A673 (cell line): ENCODE measurements at regions of chr21 and their contacts with region 1.

Region 1: GRCh38 chr21:17679002-17679600 is 66.4 kb upstream of the BTG3 start:
- DNase-seq: peak; percentile 61
- H3K4me3 ChIP-seq: no peak overlapping the region
- H3K27ac ChIP-seq: no peak overlapping the region
- H3K4me1 ChIP-seq: no peaks in the 10 kb centered on the region
- H3K27me3 ChIP-seq: no peaks in the 10 kb centered on the region
- CTCF ChIP-seq: peak; percentile 77

Region 2: GRCh38 chr21:17793246-17794123 is 114.4 kb after region 1 on chr21:
- CTCF ChIA-PET with region 1: no interaction called
- POLR2A ChIA-PET with region 1: no interaction called
- intact Hi-C with region 1: no loop called
- DNase-seq: peak; percentile 2
- H3K4me3 ChIP-seq: no peak overlapping the region
- H3K27ac ChIP-seq: no peak overlapping the region
- H3K4me1 ChIP-seq: peaks cover 11% of the 10 kb centered on the region
- H3K27me3 ChIP-seq: no peaks in the 10 kb centered on the region
- CTCF ChIP-seq: no peak

Region 3: DNA sequence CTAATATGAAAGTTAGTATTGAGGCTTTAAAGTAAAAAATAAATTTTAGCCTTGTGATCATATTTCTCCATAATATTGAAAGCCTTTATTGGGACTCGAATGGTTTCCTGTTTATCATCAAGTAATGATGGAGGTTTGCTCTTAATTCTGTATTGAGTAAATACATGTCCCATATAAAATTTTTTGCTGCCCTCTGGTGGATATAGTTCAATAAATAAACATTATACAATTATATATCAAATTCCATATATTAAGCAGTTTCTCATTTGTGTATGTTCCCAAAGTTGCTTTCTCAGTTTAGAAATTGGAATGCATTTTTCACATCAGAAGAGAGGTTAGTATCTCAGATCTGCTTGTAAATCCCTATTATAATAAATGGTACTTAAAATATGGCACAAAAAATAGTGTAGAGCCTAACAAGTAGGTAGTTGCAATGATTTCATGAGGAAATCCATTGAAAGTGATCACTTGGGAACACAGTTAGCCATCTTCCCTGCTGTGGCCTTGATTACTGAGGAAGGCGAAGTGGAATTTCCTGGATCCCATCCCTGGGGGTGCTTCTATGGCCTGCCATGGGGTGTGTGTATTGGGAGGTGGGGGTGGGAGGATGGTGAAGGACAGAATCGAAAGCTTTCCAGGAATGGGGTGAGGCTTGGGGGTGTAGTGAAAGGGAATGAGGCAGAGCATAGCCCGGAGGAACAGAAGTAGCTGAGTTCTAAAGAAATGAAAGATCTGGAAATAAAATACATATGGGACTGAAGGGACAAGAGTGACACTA is 224.1 kb after region 1 on chr21:
- CTCF ChIA-PET with region 1: no interaction called
- POLR2A ChIA-PET with region 1: no interaction called
- intact Hi-C with region 1: loop called (anchors 2 kb)
- DNase-seq: peak; percentile 50
- H3K4me3 ChIP-seq: no peak overlapping the region
- H3K27ac ChIP-seq: no peak overlapping the region
- H3K4me1 ChIP-seq: no peaks in the 10 kb centered on the region
- H3K27me3 ChIP-seq: no peaks in the 10 kb centered on the region
- CTCF ChIP-seq: peak; percentile 48; the same call in 1 of the 2 replicates

Region 4: DNA sequence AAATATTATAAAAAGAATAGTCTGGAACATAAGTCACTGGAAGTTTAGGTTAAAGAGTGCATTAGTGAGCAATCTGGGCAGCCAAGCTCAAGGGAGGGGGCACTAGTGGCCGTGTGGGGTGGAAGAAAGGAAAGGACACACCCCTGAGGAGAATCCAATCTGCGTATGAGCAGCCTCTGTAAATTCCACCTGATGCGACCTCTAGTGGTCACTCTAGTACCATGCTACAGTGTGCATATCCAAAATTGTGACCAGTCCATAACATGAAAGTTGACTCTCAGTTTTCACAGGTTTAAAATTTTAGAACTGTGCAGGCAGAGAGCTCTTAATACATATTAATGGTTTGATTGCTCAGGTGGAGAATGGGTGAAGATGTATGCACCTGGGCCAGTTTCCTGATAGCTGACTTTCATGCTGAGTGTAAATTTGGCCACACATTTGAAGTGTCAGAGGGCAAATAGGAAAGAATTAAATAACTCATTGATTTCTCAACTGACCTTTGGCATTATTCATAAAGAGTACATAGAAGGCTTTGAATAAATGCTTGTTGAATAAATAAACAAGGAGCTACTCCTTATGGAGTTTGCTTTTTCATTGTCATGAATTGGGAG is 246.0 kb after region 1 on chr21:
- CTCF ChIA-PET with region 1: no interaction called
- POLR2A ChIA-PET with region 1: no interaction called
- intact Hi-C with region 1: loop called (anchors 2 kb)
- DNase-seq: peak; percentile 63
- H3K4me3 ChIP-seq: no peak overlapping the region
- H3K27ac ChIP-seq: no peak overlapping the region
- H3K4me1 ChIP-seq: no peaks in the 10 kb centered on the region
- H3K27me3 ChIP-seq: no peaks in the 10 kb centered on the region
- CTCF ChIP-seq: peak; percentile 83